ENCODE measurements at regions of chr11 and their contacts with region 1.

Region 1: GRCh38 chr11:78645226-78646202 is 70.8 kb upstream of the NARS2 start:
- DNase-seq: peak; percentile 34 to 74
- ATAC-seq: peak; percentile 92

Region 2: GRCh38 chr11:78961247-78961646 is 315.7 kb after region 1 on chr11:
- intact Hi-C with region 1: loop called in 1 of 2 experiments (anchors 10 kb)
- DNase-seq: peak in 1 of 2 donors; percentile 16
- ATAC-seq: peak; percentile 98

Region 3: DNA sequence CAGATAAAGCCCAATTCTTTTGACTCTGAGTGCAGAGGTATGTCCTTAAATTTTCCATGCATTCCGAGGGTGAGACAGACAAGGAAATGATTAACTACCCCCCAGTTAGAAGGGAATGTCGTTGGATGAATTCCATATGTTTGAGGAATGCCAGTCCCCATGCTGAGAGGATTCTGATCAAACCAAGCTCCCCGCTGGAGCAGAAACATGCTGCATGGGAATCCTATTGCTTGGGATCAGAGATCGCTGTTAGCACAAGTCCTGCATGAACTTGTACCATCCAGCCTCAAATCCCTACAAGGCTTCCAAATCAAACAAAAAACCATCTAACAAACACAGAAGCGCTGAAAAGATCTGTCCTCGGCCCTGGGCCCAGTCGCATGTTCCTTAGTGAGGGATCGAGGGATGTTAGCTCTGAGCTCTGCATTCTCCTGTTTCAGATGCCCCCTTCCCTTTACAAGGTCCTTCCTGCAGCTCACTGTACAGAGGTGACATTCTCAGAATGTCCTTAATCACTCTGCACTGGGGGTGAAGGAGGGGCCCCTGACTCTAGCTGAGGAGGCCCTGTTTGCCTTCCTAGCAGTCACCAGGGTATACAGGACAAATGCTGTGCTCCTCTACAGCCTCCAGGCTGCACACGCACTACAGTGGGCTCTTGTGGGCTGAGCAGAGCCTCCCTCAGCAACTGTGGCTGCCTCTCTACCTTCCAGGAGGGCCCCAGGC is 441.9 kb after region 1 on chr11:
- intact Hi-C with region 1: loop called in 1 of 2 experiments (anchors 10 kb)
- DNase-seq: no peak
- ATAC-seq: no peak

Region 4: GRCh38 chr11:79159657-79160450 is 514.3 kb after region 1 on chr11:
- intact Hi-C with region 1: loop called in 1 of 2 experiments (anchors 10 kb)
- DNase-seq: no peak
- ATAC-seq: no peak

Measured in left colon (tissue), 2 donors.